ENCODE measurements at regions of chr2 and their contacts with region 1.

Region 1: GRCh38 chr2:100562732-100563720 is at the start of gene PDCL3:
- DNase-seq: peak; percentile 98
- ATAC-seq: peak; percentile 97 to 98
- H3K4me3 ChIP-seq: peak within 1 kb of the TSS; percentile 66 to 94 (median 80)
- H3K27ac ChIP-seq: peak within 1 kb of the TSS; percentile 94 to 97 (median 95)
- H3K4me1 ChIP-seq: peaks cover 0 to 24% of the 10 kb centered on the region in 2 donors
- H3K27me3 ChIP-seq: no peaks in the 10 kb centered on the region
- CTCF ChIP-seq: peak in 3 of 5 experiments; percentile 13 to 34 (median 16)
- POLR2A ChIP-seq: peak; percentile 62 to 83
- total RNA-seq, gene PDCL3: 16.6 to 37.3 (median 27.8) TPM

Region 2: DNA sequence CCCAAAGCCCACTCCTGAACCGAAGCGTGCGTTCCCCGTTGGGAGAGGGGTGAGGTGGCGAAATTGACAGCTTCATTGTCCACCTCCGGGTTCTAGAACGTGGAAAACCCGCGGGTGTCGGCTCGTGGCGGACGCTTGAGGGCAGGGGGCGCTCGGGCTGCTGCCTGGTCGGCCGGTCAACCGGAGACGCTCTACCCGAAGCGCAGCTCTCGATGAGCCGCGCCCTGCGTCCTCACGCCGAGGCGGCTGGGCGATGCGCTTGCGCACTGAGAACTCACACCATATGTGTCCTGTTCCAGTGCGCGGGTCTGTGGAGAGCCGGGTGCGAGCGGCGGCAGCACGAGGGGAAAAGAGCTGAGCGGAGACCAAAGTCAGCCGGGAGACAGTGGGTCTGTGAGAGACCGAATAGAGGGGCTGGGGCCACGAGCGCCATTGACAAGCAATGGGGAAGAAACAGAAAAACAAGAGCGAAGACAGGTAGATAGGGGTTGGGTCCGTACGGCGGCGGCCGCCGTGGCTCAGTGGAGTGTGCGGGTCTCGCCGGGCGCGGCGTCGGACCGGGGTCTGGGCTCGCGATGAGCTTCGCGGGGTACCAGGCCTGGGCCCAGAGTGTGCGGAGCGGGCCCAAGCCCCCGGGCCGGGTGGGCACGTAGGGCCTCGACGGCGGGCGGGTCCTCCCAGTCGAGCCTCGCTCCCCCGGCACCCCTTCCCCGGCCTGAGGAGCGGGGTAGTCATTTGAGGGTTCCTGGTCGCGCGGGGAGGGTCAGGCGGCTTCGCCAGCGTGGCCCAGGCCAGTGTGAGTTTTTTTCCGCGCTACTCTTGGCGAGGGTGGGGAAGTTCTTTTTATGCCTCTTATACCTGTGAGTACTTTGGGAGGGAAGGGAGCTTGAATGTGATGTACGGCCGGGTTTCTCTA is 1225.7 kb before region 1 on chr2 and contains the start of gene EIF5B:
- in situ Hi-C with region 1: no loop called
- intact Hi-C with region 1: loop called (anchors 2 kb)
- DNase-seq: peak; percentile 95 to 96
- ATAC-seq: peak; percentile 77 to 81
- H3K4me3 ChIP-seq: peak within 1 kb of the TSS; percentile 87 to 98 (median 92)
- H3K27ac ChIP-seq: peak within 1 kb of the TSS; percentile 94 to 98 (median 97)
- H3K4me1 ChIP-seq: peaks cover 35 to 38% of the 10 kb centered on the region in 2 donors
- H3K27me3 ChIP-seq: no peaks in the 10 kb centered on the region
- CTCF ChIP-seq: peak in 4 of 5 experiments; percentile 38 to 69 (median 54)
- POLR2A ChIP-seq: peak; percentile 82 to 85
- total RNA-seq, gene EIF5B: 33.0 to 71.3 (median 50.7) TPM

Region 3: GRCh38 chr2:100272841-100273329 is 290.1 kb before region 1 on chr2:
- in situ Hi-C with region 1: no loop called
- intact Hi-C with region 1: no loop called
- DNase-seq: peak in 1 of 2 donors; percentile 21
- ATAC-seq: no peak
- H3K4me3 ChIP-seq: no peak overlapping the region
- H3K27ac ChIP-seq: no peak overlapping the region
- H3K4me1 ChIP-seq: no peaks in the 10 kb centered on the region
- H3K27me3 ChIP-seq: no peaks in the 10 kb centered on the region
- CTCF ChIP-seq: no peak
- POLR2A ChIP-seq: no peak

Region 4: GRCh38 chr2:100427628-100428258 is 135.3 kb before region 1 on chr2:
- in situ Hi-C with region 1: no loop called
- intact Hi-C with region 1: loop called (anchors 5 kb)
- DNase-seq: no peak
- ATAC-seq: no peak
- H3K4me3 ChIP-seq: no peak overlapping the region
- H3K27ac ChIP-seq: no peak overlapping the region
- H3K4me1 ChIP-seq: no peaks in the 10 kb centered on the region
- H3K27me3 ChIP-seq: no peaks in the 10 kb centered on the region
- CTCF ChIP-seq: peak in 2 of 5 experiments; percentile 33 to 40
- POLR2A ChIP-seq: no peak

Region 5: DNA sequence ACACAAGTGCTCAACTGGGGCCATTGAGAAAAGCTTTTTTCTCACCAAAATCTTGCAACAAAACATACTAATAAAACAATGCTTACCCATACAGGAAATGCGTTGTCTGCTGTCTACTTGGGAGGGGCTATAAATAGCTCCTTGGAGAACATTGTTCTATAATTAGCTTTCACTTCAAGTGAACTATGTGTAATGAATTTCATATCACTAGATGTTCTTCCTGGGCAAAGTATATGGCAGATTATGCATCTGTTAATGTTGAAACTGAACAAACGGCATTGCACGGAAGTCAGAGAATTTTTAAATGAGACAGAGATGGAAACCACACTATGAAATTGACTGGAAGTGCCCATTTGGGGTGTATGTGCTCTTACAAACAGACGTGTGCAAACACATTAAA is 250.5 kb after region 1 on chr2:
- in situ Hi-C with region 1: no loop called
- intact Hi-C with region 1: loop called (anchors 5 kb)
- DNase-seq: no peak
- ATAC-seq: peak; percentile 92 to 95
- H3K4me3 ChIP-seq: no peak overlapping the region
- H3K27ac ChIP-seq: peak overlapping the region; percentile 42 to 68 (median 54)
- H3K4me1 ChIP-seq: peaks cover 23 to 34% of the 10 kb centered on the region in 2 donors
- H3K27me3 ChIP-seq: no peaks in the 10 kb centered on the region
- CTCF ChIP-seq: no peak
- POLR2A ChIP-seq: no peak

Region 6: GRCh38 chr2:101252408-101253012 is 689.5 kb after region 1 on chr2 and contains the start of gene CNOT11:
- in situ Hi-C with region 1: no loop called
- intact Hi-C with region 1: loop called (anchors 1 kb)
- DNase-seq: peak; percentile 97 to 99
- ATAC-seq: peak; percentile 91 to 93
- H3K4me3 ChIP-seq: peak within 1 kb of the TSS; percentile 72 to 99 (median 84)
- H3K27ac ChIP-seq: peak within 1 kb of the TSS; percentile 81 to 100 (median 94)
- H3K4me1 ChIP-seq: peaks cover 17 to 31% of the 10 kb centered on the region in 2 donors
- H3K27me3 ChIP-seq: no peaks in the 10 kb centered on the region
- CTCF ChIP-seq: no peak
- POLR2A ChIP-seq: peak; percentile 80 to 93
- total RNA-seq, gene CNOT11: 31.2 to 42.0 (median 35.5) TPM

Measured in gastrocnemius medialis (tissue), 4 donors.